ENCODE measurements at regions of chr1 and their contacts with region 1.

Region 1: DNA sequence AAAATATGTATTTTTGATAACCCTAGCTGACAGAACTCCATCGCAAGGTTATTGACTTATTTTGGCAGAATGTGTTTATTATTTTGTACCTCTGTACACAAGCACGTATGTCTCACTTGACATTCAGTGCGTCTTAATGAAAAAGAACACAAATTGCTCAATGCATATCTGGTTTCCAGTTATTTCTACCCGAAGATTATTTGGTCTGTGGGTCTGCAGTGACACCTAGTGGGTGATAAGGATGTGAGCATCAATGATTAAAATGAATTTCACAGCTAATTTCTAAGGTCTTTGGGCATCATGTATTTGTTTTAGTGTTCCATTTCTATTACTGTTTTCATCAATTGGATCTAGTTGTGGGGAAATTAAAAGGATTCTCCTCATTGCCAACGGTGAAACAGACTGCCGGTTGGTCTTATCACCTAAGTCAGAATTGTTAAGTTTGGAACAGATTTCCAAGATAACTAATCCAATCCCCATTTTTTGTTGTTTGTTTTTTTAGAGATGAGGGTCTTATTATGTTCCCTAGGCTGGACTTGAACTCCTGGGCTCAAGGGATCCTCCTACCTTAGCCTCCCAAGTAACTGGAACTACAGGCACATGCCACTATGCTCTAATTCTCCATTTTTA is 13.9 kb downstream of the DDX20 start:
- DNase-seq: peak; percentile 84
- H3K4me3 Mint-ChIP-seq: no peak overlapping the region
- H3K27ac Mint-ChIP-seq: no peak overlapping the region
- H3K4me1 Mint-ChIP-seq: no peaks in the 10 kb centered on the region
- H3K27me3 Mint-ChIP-seq: no peaks in the 10 kb centered on the region
- CTCF ChIP-seq: peak; percentile 81

Region 2: DNA sequence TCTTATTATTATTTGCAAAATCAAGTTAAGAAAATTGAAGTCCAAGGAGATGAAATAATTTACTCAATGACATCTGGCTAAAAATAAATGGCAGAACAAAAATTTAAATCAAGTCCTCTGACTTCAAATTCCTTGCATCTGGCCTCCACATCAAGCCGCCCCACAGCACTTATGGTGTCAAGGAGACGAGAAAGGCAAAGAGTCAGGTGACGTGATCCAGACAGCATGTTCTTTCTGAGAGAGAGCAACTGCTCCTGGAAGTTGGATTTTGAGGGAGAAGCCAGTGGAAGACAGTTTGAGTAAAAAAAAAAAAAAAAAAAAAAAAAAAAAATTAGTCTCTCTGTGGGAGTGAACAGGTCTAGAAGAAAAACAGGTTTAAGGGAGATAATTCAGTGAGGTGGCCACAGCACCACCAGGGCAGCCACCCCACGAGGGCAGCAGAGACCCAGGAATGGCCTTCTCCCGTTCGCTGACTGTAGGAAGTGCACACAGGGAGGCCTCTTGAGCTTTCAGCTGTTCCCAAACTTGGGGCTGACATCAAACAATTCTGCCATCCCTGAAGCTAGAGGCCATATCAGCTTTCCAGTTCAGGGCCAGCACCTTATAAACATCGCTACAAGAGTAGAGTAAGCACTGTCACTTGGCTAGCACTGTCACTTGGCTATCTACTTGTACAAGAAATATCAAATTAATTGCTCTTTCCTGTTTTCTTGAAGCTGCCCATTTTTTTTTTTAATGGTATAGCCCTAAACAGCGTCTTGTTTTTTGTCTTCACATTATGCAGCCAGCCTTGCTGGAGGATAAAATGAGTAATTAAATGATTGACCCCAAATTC is 288.0 kb before region 1 on chr1:
- CTCF ChIA-PET with region 1: interaction called, 24 read pairs
- POLR2A ChIA-PET with region 1: no interaction called
- intact Hi-C with region 1: loop called (anchors 1 kb)
- DNase-seq: peak; percentile 64
- H3K4me3 Mint-ChIP-seq: no peak overlapping the region
- H3K27ac Mint-ChIP-seq: no peak overlapping the region
- H3K4me1 Mint-ChIP-seq: no peaks in the 10 kb centered on the region
- H3K27me3 Mint-ChIP-seq: no peaks in the 10 kb centered on the region
- CTCF ChIP-seq: peak; percentile 58

Region 3: DNA sequence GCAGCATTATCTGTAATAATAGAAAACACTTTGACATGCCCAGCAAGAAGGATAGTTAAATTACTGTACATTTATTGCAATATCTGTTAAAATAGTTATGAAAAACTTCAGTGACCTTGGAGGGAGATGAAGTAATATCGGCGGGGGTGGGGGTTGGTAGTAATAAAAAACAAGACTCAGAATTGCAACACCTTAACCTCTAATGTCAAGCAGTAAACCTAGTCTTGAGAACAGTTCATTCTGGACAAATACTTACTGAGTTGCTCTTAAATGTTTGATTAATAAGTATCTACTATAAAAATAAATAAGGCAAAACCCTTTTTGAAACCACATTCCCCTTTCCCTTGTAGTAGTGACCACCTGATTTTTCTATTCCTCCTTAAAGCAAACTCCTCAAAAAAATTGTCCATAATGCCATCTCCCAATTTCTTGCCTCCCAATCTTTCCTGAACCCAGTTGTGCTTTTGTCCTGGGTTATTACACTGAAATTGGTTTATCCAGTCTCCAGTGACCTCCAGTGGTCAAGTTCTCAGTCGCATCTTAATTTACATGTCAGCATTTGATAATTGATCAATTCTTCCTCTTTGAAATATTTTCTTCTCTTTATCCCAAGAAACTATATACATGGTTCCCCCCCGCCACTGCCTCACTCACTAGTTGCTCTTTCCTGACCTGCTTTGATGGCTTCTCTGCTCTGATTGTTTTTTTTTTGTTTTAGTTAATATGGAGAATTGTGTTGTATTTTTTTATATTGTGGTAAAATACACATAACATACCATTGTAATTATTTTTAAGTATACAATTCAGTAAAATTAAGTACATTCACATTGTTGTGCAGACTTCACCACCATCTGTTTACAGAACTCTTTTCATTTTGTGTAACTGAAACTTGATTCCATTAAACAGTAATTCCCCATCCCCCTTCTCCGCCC is 113.3 kb before region 1 on chr1:
- CTCF ChIA-PET with region 1: no interaction called
- POLR2A ChIA-PET with region 1: no interaction called
- intact Hi-C with region 1: loop called (anchors 10 kb)
- DNase-seq: peak; percentile 63
- H3K4me3 Mint-ChIP-seq: no peak overlapping the region
- H3K27ac Mint-ChIP-seq: peak overlapping the region; percentile 3
- H3K4me1 Mint-ChIP-seq: peaks cover 9% of the 10 kb centered on the region
- H3K27me3 Mint-ChIP-seq: no peaks in the 10 kb centered on the region
- CTCF ChIP-seq: peak; percentile 57

Region 4: DNA sequence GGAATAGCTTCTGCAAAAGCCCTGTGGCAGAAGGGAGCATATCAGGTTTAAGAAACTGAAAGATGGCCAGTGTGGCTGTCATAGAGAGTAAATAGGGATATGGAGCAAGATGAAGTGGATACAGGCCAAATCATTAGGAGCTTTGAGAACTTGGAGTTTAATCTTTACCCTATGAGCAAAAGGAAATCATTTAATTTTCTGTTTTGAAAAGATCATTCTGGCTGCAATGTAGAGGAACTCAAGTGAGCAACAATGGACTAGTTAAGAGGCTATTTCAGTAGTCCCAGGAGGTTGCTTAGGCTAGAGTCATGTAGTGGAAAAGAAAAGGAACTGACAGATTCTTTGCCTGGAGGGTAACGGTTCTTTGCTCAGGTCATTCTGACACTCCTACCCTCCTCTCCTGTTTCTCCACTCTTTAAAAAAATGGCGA is 102.8 kb before region 1 on chr1:
- CTCF ChIA-PET with region 1: no interaction called
- POLR2A ChIA-PET with region 1: no interaction called
- intact Hi-C with region 1: no loop called
- DNase-seq: no peak
- H3K4me3 Mint-ChIP-seq: no peak overlapping the region
- H3K27ac Mint-ChIP-seq: no peak overlapping the region
- H3K4me1 Mint-ChIP-seq: peaks cover 7% of the 10 kb centered on the region
- H3K27me3 Mint-ChIP-seq: no peaks in the 10 kb centered on the region
- CTCF ChIP-seq: no peak

Region 5: DNA sequence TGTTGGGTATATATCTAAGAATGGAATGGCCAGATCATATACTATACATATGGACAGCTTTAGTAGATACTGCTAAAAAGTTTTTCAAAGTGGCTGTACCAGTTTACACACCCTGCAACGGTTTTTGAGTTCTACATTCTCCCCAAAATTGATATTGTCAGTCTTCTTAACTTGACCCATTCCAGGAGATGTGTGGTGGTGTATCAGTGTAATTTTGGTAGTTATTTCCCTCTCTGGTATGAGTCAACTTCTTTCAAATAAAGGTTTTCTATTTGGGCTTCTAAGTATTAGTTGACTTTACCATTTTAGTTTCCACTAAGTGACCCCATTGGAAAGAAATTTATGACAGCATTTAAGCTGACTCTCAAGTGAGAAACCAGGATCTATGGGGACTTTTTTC is 59.6 kb before region 1 on chr1:
- CTCF ChIA-PET with region 1: interaction called, 73 read pairs
- POLR2A ChIA-PET with region 1: interaction called, 4 read pairs
- intact Hi-C with region 1: loop called (anchors 1 kb)
- DNase-seq: no peak
- H3K4me3 Mint-ChIP-seq: no peak overlapping the region
- H3K27ac Mint-ChIP-seq: no peak overlapping the region
- H3K4me1 Mint-ChIP-seq: peaks cover 8% of the 10 kb centered on the region
- H3K27me3 Mint-ChIP-seq: no peaks in the 10 kb centered on the region
- CTCF ChIP-seq: no peak

Region 6: DNA sequence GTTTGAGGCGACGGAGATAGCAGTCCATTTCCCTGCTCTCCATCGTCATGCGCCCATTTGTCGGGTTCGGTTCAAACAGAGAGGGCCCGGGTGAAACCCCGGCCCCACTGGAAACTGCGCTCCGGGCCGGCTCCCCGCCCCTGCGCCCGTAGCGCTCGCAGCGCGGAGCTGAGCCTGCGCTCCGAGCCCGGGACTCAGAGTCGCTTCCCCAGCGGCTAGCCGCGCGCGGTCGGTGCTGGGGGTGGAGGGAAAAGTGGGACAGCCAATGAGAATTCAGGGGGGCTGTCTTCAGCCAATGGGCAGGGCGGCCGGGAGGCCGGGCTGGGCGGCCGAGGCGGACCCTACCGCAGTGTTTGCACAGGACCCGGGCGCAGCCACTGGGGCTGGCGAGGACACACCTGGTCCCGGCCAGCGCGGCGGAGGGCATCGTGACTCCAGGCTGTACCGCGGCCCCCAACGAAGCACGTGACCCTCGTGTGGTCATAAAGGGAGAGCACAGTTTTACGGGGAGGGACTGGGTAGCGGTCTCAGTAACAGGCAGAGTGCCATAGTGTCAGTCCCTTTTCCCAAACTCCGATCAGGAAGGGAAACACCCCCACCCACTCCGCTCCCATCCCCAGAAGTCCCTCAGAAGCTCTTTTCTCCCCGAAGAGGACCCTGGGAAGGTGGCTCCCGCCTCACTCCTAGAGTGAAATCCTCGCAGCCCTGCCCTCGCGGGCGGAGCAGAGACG is 30.3 kb before region 1 on chr1 and contains the start of gene INKA2:
- CTCF ChIA-PET with region 1: interaction called, 11 read pairs
- POLR2A ChIA-PET with region 1: interaction called, 11 read pairs
- intact Hi-C with region 1: no loop called
- DNase-seq: peak; percentile 92
- H3K4me3 Mint-ChIP-seq: peak within 1 kb of the TSS; percentile 82
- H3K27ac Mint-ChIP-seq: peak within 1 kb of the TSS; percentile 94
- H3K4me1 Mint-ChIP-seq: peaks cover 17% of the 10 kb centered on the region
- H3K27me3 Mint-ChIP-seq: no peaks in the 10 kb centered on the region
- CTCF ChIP-seq: no peak
- total RNA-seq, gene INKA2: 3.5 and 6.6 TPM in 2 replicates

Region 7: GRCh38 chr1:111755331-111756123 is 14.1 kb before region 1 on chr1 and contains the start of gene DDX20:
- CTCF ChIA-PET with region 1: interaction called, 16 read pairs
- POLR2A ChIA-PET with region 1: interaction called, 23 read pairs
- intact Hi-C with region 1: no loop called
- DNase-seq: peak; percentile 96
- H3K4me3 Mint-ChIP-seq: peak within 1 kb of the TSS; percentile 95
- H3K27ac Mint-ChIP-seq: peak within 1 kb of the TSS; percentile 95
- H3K4me1 Mint-ChIP-seq: peaks cover 6% of the 10 kb centered on the region
- H3K27me3 Mint-ChIP-seq: no peaks in the 10 kb centered on the region
- CTCF ChIP-seq: peak; percentile 88
- total RNA-seq, gene DDX20: 14.8 and 16.8 TPM in 2 replicates

Region 8: GRCh38 chr1:111990878-111991718 is 221.5 kb after region 1 on chr1:
- CTCF ChIA-PET with region 1: interaction called, 5 read pairs
- POLR2A ChIA-PET with region 1: no interaction called
- intact Hi-C with region 1: loop called (anchors 1 kb)
- DNase-seq: peak; percentile 59
- H3K4me3 Mint-ChIP-seq: peak overlapping the region; percentile 76
- H3K27ac Mint-ChIP-seq: no peak overlapping the region
- H3K4me1 Mint-ChIP-seq: peaks cover 17% of the 10 kb centered on the region
- H3K27me3 Mint-ChIP-seq: peaks cover 56% of the 10 kb centered on the region
- CTCF ChIP-seq: peak; percentile 34

Measured in MCF 10A (cell line).